Activated naive CD4-positive, alpha-beta T cell treated with anti-CD3 and anti-CD28 coated beads for 36 hours (primary cell): ENCODE measurements at regions of chr7 and their contacts with region 1.

Region 1: DNA sequence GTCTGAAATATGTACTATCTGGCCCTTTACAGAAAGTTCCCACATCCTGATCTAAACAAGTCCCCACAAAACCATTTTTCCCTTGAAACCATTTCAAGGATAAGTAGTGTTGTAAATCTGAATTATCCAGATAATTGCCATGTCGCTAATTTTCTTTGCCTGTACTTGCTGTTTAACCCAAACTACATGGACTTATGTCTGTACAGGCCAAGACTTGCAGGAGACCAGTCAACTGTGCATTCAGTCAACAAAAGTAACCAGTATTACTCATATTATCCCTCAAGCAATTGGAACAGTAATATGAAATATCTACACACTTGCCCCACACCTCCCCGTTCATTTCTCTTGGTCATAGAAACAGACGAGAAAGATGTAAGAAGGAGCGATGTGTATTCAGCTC is 347.8 kb upstream of the NFE2L3 start:
- DNase-seq: no peak
- H3K4me3 Mint-ChIP-seq: no peak overlapping the region
- H3K27ac Mint-ChIP-seq: no peak overlapping the region
- H3K4me1 Mint-ChIP-seq: peaks cover 19% of the 10 kb centered on the region
- H3K27me3 Mint-ChIP-seq: peaks cover 3% of the 10 kb centered on the region

Region 2: GRCh38 chr7:25615003-25615402 is 189.2 kb before region 1 on chr7:
- CTCF ChIA-PET with region 1: no interaction called
- intact Hi-C with region 1: no loop called
- DNase-seq: no peak
- H3K4me3 Mint-ChIP-seq: no peak overlapping the region
- H3K27ac Mint-ChIP-seq: no peak overlapping the region
- H3K4me1 Mint-ChIP-seq: peaks cover 45% of the 10 kb centered on the region
- H3K27me3 Mint-ChIP-seq: no peaks in the 10 kb centered on the region

Region 3: DNA sequence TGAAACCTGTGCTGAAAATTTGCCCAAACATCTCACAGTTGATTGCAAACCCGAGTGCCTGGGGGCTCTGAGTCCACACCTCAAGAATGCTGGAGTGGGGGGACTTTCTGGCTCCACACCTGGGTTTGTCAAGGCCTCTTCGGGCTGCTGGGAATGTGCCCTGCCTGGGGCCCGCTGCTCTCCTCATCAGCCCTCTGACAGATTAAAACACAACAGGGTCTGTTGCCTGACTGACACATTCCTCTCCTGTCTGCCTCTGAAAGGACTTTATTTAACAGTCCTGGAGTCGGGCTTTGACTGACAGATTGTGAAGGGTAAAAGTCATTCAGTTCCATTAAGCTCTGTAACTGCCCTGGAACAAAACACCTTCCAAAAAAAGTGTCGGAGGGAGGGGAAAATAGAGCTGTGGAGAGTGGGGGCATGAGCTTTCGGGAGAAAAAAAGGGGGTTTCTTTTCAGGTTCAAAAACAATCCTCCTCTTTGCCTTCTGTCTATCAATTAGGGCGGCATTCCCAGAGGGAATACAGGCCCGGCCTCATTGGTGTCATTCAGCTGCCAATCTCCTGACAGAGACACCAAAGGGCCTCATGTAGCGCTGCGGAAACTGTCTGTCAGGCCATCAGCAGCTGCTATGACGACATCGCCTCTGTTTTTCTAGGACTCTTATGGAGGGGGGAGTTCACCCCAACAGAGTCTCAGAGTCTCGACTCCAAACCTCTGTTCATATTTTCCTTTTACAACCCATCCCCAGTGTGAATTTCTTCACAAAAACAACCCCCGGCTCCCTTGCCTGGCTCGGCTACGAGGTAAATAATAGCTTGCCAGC is 51.0 kb before region 1 on chr7:
- CTCF ChIA-PET with region 1: no interaction called
- intact Hi-C with region 1: no loop called
- DNase-seq: no peak
- H3K4me3 Mint-ChIP-seq: no peak overlapping the region
- H3K27ac Mint-ChIP-seq: no peak overlapping the region
- H3K4me1 Mint-ChIP-seq: no peaks in the 10 kb centered on the region
- H3K27me3 Mint-ChIP-seq: no peaks in the 10 kb centered on the region

Region 4: DNA sequence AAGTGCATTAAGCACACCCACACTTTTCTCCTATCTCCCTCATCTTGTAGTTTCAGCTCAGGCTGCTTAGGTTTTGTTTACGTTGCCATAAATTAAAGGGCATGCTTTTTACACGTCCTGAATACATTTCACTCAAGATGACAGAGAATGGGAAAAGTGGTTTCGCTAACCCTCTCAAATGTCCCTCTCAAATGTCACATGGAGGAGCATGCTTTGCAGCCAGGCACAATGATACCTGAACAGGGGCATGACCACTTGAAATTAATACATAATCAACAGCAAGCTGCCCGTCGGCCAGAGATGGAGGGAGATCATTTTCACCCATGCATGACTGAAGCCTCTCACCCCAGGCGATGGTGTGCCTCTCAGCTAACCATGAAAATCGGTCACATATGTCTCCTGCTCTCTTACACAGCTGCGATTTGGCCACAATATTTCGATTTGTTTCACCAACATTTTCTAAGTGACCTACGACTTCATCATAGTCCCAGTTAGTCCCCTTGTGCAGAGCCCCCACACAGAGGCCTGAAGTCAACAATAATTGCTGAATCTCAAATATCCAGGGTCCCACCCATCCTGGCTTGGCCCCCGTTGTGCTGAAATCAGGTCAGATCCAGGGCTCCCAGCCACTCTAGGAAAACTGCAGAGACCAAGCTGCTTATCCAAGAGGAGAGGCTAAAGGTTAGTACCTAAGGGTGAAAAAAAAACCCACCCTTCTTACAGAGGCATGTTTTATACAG is 26.0 kb before region 1 on chr7:
- CTCF ChIA-PET with region 1: no interaction called
- intact Hi-C with region 1: loop called (anchors 2 kb)
- DNase-seq: no peak
- H3K4me3 Mint-ChIP-seq: no peak overlapping the region
- H3K27ac Mint-ChIP-seq: no peak overlapping the region
- H3K4me1 Mint-ChIP-seq: no peaks in the 10 kb centered on the region
- H3K27me3 Mint-ChIP-seq: peaks cover 13% of the 10 kb centered on the region

Region 5: DNA sequence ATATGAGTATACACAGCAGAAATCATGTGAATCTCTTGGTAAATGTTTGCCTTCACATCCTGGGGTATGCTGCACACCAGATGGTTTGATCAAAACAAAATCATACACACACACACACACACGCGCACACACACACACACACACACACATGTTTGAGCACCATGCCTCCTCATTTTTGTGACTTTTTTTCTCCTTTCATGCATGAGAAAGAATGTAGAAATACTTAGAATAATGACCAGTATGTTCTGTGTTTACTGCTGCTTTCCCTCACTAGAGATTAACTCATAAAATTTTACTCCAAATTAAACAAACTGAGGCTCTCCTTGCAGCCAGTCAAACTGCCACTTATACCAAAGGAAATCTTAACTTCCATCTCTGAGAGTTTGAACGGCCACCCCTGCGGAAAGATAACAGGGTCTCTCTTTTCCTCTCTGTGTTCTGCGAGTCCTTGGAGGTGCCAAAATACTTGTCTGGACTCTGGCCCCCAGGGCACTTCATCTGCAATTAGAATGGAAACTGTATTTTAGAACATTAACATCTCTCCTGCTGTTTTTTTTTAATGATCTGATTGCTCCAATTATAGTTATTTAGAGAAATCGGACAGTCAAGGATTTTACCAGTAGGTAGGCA is 27.0 kb after region 1 on chr7:
- CTCF ChIA-PET with region 1: no interaction called
- intact Hi-C with region 1: no loop called
- DNase-seq: no peak
- H3K4me3 Mint-ChIP-seq: no peak overlapping the region
- H3K27ac Mint-ChIP-seq: no peak overlapping the region
- H3K4me1 Mint-ChIP-seq: no peaks in the 10 kb centered on the region
- H3K27me3 Mint-ChIP-seq: peaks cover 1% of the 10 kb centered on the region

Region 6: GRCh38 chr7:25857376-25857921 is 53.3 kb after region 1 on chr7:
- CTCF ChIA-PET with region 1: interaction called, 3 read pairs
- intact Hi-C with region 1: loop called (anchors 2 kb)
- DNase-seq: no peak
- H3K4me3 Mint-ChIP-seq: no peak overlapping the region
- H3K27ac Mint-ChIP-seq: no peak overlapping the region
- H3K4me1 Mint-ChIP-seq: peaks cover 31% of the 10 kb centered on the region
- H3K27me3 Mint-ChIP-seq: peaks cover 62% of the 10 kb centered on the region

Region 7: GRCh38 chr7:25951031-25951948 is 147.1 kb after region 1 on chr7:
- CTCF ChIA-PET with region 1: no interaction called
- intact Hi-C with region 1: no loop called
- DNase-seq: peak; percentile 91
- H3K4me3 Mint-ChIP-seq: peak overlapping the region; percentile 88
- H3K27ac Mint-ChIP-seq: no peak overlapping the region
- H3K4me1 Mint-ChIP-seq: peaks cover 16% of the 10 kb centered on the region
- H3K27me3 Mint-ChIP-seq: peaks cover 7% of the 10 kb centered on the region